ENCODE measurements at regions of chr5 and their contacts with region 1.

Region 1: DNA sequence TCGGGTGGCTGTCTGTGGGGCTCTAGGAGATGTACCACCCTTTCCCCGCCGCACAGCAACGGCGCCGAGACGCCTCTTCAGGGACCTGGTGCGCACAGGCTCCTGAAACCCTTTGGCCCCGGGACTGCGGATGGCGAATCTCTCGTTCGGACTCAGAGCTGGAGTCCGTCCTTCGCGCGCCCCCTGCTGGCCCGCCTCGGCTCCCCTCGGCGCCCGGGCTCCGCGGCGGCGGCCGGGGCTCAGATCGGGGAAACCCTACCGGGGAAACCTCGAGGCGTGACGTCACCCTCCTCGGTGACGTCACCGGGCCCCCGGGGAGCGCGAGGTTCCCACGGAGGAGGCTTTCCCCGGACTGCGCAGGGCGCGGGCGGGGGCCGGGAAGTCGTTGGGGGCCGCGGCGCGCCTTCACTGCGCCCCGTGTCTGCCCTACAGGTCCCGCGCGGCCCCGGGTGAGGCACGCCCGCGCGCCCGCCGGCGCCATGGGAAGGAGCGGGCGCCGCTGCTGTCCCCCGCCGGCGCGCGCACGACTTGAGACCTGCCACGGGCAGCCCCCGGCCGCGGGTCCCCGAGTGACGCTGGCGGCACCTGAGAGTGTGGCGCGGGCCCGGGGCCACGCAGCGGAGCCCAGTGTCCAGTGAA is 7.9 kb downstream of the PRR7 start:
- DNase-seq: peak; percentile 96
- ATAC-seq: peak; percentile 47
- H3K4me3 Mint-ChIP-seq: peak overlapping the region; percentile 80
- H3K27ac Mint-ChIP-seq: no peak overlapping the region
- H3K4me1 Mint-ChIP-seq: peaks cover 27% of the 10 kb centered on the region
- H3K27me3 Mint-ChIP-seq: no peaks in the 10 kb centered on the region

Region 2: DNA sequence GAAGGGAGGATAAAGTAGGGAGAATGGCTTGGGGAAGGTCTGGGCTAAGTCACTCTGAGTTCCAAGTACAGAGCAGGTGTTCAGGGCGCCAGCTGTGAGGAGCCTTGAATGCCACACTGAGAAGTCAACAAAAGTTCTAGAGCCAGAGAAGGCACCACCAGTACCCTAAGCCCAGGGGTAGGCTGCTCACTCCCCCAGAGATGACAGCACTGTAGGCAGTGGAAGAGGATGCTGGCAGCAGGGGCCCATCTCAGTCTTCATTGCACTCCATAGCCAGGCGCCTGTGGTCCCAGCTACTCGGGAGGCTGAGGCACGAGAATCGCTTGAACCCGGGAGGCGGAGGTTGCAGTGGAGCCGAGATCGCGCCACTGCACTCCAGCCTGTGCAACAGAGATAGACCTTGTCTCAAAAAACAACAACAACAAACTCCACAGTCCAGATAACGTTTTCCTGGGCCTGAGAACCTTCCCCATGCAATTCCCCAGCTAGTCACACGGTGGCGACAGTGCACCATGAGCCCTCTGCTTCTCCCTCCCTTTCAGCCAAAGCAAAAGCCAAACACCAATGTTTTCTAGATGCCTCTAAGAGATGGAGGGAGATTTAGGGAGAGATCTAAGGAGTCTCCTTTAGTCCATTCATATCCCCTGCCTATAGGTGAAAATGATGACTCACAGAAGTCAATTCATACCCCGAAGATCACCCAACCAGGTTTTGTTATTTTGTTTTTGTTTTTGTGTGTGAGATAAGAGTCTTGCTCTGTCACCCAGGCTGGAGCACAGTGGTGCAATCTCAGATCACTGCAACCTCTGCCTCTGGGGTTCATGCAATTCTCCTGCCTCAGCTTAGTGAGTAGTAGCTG is 340.7 kb before region 1 on chr5:
- CTCF ChIA-PET with region 1: interaction called, 3 read pairs
- POLR2A ChIA-PET with region 1: no interaction called
- intact Hi-C with region 1: loop called in 1 of 2 experiments (anchors 1 kb)
- DNase-seq: peak; percentile 88
- ATAC-seq: peak; percentile 49
- H3K4me3 Mint-ChIP-seq: no peak overlapping the region
- H3K27ac Mint-ChIP-seq: peak overlapping the region; percentile 11
- H3K4me1 Mint-ChIP-seq: peaks cover 15% of the 10 kb centered on the region
- H3K27me3 Mint-ChIP-seq: no peaks in the 10 kb centered on the region

Region 3: DNA sequence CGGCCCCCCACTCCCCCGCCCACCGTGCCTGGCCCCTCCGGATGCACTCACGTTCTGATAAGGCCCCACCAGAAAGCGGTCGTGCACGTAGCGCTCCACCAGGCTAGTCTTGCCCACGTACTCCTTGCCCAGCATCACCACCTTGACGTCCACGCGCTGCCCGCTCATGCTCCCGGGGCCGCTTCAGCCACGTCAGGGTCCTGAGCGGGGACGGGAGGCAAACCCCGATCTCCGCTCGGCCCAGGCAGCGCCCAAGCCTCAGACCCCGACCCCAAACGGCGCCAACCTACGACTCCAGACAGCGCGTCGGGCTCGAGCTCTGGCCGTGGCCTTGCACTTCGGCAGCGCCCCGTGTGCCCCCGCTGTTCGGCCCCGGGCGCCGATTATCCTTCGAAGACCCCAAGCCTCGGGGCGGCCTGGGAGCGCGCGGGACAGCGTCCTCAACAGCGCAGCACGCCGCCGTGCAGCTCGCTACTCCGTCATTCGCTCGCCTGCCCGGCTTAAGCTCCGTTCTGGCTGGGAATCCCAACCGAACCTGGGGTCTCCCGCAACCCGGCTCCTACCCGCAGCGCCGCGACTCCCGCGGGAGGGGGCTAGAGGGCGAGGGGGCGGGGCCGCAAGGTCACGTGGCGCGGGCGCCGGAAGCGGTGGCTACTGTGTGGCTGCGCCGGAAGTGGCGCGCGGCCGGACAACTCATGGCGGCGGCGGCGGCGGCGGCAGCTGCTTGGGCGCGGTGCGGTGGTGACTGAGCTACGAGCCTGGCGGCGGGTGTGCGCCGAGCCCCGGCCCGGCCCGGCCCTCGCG is 151.2 kb before region 1 on chr5 and contains the starts of genes PRELID1 and RAB24:
- CTCF ChIA-PET with region 1: interaction called, 4 read pairs
- POLR2A ChIA-PET with region 1: no interaction called
- intact Hi-C with region 1: loop called in 1 of 2 experiments (anchors 1 kb)
- DNase-seq: peak; percentile 95
- ATAC-seq: peak; percentile 69
- H3K4me3 Mint-ChIP-seq: peak within 1 kb of the TSS; percentile 93
- H3K27ac Mint-ChIP-seq: peak within 1 kb of the TSS; percentile 90
- H3K4me1 Mint-ChIP-seq: peaks cover 59% of the 10 kb centered on the region
- H3K27me3 Mint-ChIP-seq: no peaks in the 10 kb centered on the region
- total RNA-seq, gene PRELID1: 266 to 362 TPM
- total RNA-seq, gene RAB24: 10.9 to 21.0 TPM

Region 4: DNA sequence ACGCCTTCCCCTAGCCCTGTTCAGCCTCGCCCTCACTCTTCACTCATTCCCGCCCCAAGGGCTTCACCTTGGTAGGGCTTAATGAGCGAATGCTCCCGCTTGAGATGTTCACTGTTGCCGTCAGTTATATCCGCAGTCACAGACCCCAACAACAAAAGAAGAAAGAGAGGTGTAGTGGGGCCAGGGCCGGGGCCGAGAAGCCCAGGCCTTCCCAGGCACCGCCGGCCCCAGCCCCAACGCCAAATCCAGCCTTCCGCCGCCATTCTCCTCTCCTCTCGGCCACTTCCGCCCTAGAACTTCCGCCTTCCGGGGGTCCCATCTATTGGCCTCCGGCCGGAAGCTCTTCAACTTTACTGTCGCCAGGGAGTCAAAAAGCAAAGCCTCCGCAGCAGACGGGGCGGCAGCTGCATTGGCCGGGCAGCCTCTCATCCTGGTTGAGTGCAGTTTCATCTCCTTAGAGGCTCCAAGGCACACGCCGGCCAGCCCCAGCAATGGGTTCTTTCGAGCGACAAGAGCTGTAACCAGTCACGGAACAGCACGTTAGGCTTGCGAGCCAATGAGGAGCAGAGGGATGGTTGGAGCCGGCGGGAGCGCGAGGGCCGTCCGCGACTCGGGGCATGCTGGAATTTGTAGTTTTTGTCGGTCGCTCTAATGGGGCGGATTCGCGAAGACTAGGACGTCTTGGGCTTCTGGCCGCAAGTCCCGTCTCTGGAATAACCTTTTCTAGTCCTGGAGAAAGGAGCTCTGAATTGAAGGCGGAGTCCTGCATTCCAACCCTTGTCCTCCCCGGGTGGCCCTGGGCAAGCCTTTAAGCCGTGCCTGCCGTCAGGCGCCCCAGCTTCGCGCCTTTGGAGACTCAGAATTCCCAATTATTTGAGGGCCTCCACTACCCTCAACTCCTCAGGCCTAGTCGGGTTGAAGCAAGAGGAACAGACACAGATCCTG is 102.9 kb before region 1 on chr5 and contains the start of gene LMAN2:
- CTCF ChIA-PET with region 1: interaction called, 8 read pairs
- POLR2A ChIA-PET with region 1: interaction called, 3 read pairs
- intact Hi-C with region 1: loop called in 1 of 2 experiments (anchors 1 kb)
- DNase-seq: peak; percentile 95
- ATAC-seq: peak; percentile 99
- H3K4me3 Mint-ChIP-seq: peak within 1 kb of the TSS; percentile 89
- H3K27ac Mint-ChIP-seq: peak within 1 kb of the TSS; percentile 99
- H3K4me1 Mint-ChIP-seq: peaks cover 48% of the 10 kb centered on the region
- H3K27me3 Mint-ChIP-seq: no peaks in the 10 kb centered on the region
- total RNA-seq, gene LMAN2: 74.5 to 92.1 TPM

Region 5: DNA sequence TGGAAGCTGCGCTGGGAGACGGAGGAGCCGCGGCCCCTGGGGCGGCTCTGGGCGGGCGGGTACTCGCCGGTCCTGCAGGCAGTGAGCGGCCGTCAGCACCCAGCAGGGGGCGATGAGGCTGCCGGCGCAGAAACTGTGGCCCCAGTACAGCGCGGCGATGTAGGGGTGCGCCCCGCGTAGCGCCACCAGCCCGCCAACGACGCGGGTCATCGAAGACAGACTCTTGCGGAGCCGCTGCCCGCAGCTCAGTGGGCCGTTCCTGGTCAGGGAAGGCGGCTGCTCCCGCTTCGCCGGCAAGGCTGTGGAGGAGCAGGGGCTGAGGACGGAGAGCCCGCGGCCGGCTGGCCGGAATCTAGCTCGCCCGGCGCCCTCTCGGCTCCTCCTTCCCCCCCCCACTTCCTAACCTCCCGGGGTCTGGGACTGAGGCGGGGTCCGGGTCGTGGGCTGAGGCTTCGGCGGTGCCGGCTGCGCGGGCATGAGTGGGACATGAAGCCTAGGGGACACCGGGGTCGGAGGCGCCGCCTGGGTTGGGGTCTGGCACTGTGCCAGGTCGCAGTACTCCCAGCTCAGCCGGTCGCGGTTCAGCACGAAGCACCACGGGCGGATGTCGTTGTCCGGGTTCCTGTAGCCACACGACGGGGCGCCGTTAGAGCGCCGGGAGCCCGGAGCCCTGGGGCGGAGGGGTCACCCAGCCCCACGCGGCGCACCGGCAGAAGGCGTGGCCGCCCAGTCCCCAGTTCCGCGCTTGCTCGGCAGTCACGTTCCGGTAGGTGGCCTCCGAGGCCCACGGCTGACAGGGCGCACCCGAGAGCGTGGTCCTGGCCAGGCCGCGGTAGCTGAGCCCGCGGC is 50.5 kb before region 1 on chr5:
- CTCF ChIA-PET with region 1: interaction called, 188 read pairs
- POLR2A ChIA-PET with region 1: interaction called, 25 read pairs
- intact Hi-C with region 1: loop called (anchors 1 kb)
- DNase-seq: peak; percentile 91
- ATAC-seq: peak; percentile 84
- H3K4me3 Mint-ChIP-seq: peak overlapping the region; percentile 72
- H3K27ac Mint-ChIP-seq: peak overlapping the region; percentile 42
- H3K4me1 Mint-ChIP-seq: peaks cover 27% of the 10 kb centered on the region
- H3K27me3 Mint-ChIP-seq: peaks cover 14% of the 10 kb centered on the region

Region 6: DNA sequence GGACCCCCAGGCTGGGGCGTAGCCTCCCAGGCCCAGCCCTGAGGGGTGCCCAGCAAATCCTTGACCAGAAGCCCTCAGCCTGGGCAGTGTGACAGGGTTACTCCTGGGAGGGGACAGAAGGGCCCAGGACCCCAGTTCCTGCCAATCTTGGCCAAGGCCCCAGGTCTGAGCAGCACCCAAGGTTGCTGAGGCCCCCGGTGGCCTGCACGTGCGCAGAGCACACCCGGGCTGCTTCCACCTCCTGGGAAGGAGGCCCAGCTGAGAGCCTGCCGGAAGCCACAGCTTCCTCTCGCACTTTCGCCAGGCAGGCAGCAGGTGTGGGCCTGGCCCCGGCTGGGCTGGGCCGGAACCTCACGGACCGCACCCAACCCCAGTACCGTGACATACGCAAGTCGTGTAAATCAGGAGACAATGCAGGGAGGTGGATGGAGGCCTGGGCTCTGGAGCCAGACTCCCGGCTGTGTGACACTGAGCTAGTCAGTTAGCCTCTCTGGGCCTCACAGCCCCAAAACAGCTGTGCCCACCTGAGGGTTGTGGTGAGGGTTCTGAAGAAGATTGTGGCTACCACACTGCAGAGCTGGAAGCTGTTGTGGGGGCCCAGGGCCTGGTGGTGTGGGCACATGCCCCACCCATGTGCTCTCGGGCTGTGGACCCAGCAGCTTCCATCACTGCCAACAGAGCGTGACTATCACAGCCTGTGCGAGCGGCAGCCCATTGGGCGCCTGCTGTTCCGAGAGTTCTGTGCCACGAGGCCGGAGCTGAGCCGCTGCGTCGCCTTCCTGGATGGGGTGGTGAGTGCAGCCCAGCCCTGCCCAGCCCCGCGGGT is 23.0 kb before region 1 on chr5:
- CTCF ChIA-PET with region 1: interaction called, 131 read pairs
- POLR2A ChIA-PET with region 1: interaction called, 85 read pairs
- intact Hi-C with region 1: loop called (anchors 1 kb)
- DNase-seq: peak; percentile 81
- ATAC-seq: peak; percentile 19
- H3K4me3 Mint-ChIP-seq: peak overlapping the region; percentile 88
- H3K27ac Mint-ChIP-seq: peak overlapping the region; percentile 94
- H3K4me1 Mint-ChIP-seq: peaks cover 73% of the 10 kb centered on the region
- H3K27me3 Mint-ChIP-seq: no peaks in the 10 kb centered on the region

Region 7: DNA sequence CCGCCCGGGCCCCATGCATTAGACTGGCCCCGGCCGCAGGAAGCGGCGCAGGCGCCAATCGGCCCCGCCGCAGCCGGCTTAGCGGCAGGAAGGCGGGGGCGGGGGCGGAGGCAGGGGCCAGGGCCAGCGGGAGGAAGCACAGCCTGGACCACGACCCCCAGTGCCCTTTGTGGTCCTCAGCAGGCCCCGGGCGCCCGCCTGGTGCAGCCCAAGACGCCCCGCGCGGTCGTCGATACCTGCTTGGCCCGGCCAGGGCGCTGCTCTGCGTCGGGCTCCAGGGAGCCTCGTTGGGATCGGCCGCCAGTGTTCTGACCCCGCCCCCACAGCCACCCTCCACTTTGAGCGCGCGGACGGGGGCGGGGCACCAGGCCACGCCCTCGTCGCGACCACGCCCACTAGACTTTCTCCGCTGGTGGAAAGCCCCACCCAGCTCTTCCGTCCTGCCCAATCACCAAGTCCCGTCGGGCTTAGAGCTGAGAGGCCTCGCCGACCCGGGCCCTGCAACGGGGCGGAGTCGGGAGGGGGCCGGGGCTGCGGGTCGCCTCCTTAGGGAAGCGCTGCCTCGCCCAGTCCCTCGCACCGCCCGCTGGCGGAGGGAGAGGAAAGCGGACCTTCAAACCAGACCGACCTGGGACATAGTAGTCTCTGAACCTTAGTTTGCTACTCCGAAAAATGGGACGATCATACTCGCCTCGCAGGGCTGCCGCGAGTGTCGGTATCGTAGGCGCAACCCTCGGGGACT is 42.9 kb after region 1 on chr5 and contains the start of gene PDLIM7:
- CTCF ChIA-PET with region 1: interaction called, 14 read pairs
- POLR2A ChIA-PET with region 1: interaction called, 4 read pairs
- intact Hi-C with region 1: loop called (anchors 1 kb)
- DNase-seq: peak; percentile 98
- ATAC-seq: peak; percentile 86
- H3K4me3 Mint-ChIP-seq: peak within 1 kb of the TSS; percentile 73
- H3K27ac Mint-ChIP-seq: peak within 1 kb of the TSS; percentile 37
- H3K4me1 Mint-ChIP-seq: peaks cover 31% of the 10 kb centered on the region
- H3K27me3 Mint-ChIP-seq: peaks cover 12% of the 10 kb centered on the region
- total RNA-seq, gene PDLIM7: 41.9 to 50.2 TPM